Activated CD4-positive, alpha-beta T cell treated with anti-CD3 and anti-CD28 coated beads, Interleukin-2, amount 10 ng/mL, durations not matched to agents 7 days and 5 days (primary cell): ENCODE measurements at regions of chr12 and their contacts with region 1.

Region 1: GRCh38 chr12:101891462-101892273 is 14.3 kb downstream of the DRAM1 start:
- DNase-seq: no peak
- H3K4me3 Mint-ChIP-seq: no peak overlapping the region
- H3K27ac Mint-ChIP-seq: no peak overlapping the region
- H3K4me1 Mint-ChIP-seq: peaks cover 1% of the 10 kb centered on the region
- H3K27me3 Mint-ChIP-seq: no peaks in the 10 kb centered on the region

Region 2: DNA sequence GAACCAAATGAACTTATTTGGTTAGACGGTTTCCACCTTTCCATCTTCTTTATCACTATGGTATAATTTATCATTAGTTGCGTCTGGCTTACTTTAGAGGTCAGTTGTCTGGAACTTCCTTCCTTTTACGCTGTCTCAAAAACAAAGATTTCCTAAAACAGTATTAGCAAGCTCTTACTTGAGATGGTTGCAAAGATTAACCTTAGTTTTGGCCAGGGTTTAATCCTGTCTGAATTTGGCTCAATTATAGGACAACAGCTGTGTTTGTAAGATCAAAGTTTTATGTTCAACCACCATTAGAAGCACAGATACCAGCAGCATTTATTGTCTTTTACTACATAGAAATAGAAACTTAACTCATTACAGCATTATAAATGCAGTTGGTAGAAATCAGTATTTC is 178.0 kb after region 1 on chr12:
- CTCF ChIA-PET with region 1: no interaction called
- POLR2A ChIA-PET with region 1: interaction called, 13 read pairs
- DNase-seq: no peak
- H3K4me3 Mint-ChIP-seq: no peak overlapping the region
- H3K27ac Mint-ChIP-seq: no peak overlapping the region
- H3K4me1 Mint-ChIP-seq: peaks cover 6% of the 10 kb centered on the region
- H3K27me3 Mint-ChIP-seq: no peaks in the 10 kb centered on the region